IMR-90 (cell line): ENCODE measurements at regions of chr18 and their contacts with region 1.

Region 1: GRCh38 chr18:12890506-12890905 is 6.5 kb upstream of the PTPN2 start:
- DNase-seq: no peak
- ATAC-seq: no peak
- H3K4me3 ChIP-seq: no peak overlapping the region
- H3K27ac ChIP-seq: no peak overlapping the region
- H3K4me1 ChIP-seq: no peaks in the 10 kb centered on the region
- H3K27me3 ChIP-seq: 0 out of 2 replicates have a peak, but pooled peaks cover 4% of the 10 kb centered on the region
- CTCF ChIP-seq: 0 out of 2 replicates have a peak, but pooled peaks have one; percentile 10
- POLR2A ChIP-seq: no peak
- RAD21 ChIP-seq: no peak

Region 2: GRCh38 chr18:12744103-12744502 is 146.4 kb before region 1 on chr18:
- CTCF ChIA-PET with region 1: interaction called, 4 read pairs
- POLR2A ChIA-PET with region 1: no interaction called
- dilution Hi-C with region 1: no loop called
- in situ Hi-C with region 1: loop called (anchors 10 kb)
- intact Hi-C with region 1: loop called (anchors 1 kb)
- DNase-seq: peak; percentile 84
- ATAC-seq: peak; percentile 76
- H3K4me3 ChIP-seq: no peak overlapping the region
- H3K27ac ChIP-seq: no peak overlapping the region
- H3K4me1 ChIP-seq: peaks cover 6% of the 10 kb centered on the region
- H3K27me3 ChIP-seq: no peaks in the 10 kb centered on the region
- CTCF ChIP-seq: peak; percentile 87
- POLR2A ChIP-seq: no peak
- RAD21 ChIP-seq: peak; percentile 88

Region 3: DNA sequence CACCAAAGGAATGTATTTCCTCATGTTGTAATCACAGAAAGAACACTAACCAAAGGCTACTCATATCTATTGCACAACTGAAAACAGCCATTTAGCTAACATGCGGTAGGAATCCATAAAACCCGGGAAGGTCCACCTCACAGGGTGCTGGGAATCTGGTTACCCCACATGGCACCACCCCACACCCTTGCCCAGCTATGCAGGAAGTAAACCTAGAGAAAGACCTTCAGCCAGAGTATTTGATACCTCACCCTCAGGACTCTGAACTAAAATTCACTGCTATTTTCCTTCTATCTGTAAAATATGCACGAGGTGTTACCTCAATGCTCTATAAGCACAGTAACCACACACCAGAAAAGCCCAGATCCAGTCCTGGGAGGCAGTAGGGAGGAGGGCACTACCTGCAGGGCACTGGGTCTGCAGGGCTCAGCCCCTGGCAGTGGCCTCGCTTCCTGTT is 52.3 kb before region 1 on chr18:
- CTCF ChIA-PET with region 1: no interaction called
- POLR2A ChIA-PET with region 1: no interaction called
- dilution Hi-C with region 1: no loop called
- in situ Hi-C with region 1: no loop called
- intact Hi-C with region 1: no loop called
- DNase-seq: peak; percentile 90
- ATAC-seq: peak; percentile 88
- H3K4me3 ChIP-seq: no peak overlapping the region; the same call in 1 of the 2 replicates
- H3K27ac ChIP-seq: peak overlapping the region; percentile 93
- H3K4me1 ChIP-seq: peaks cover 15% of the 10 kb centered on the region
- H3K27me3 ChIP-seq: no peaks in the 10 kb centered on the region
- CTCF ChIP-seq: 0 out of 2 replicates have a peak, but pooled peaks have one; percentile 8
- POLR2A ChIP-seq: no peak
- RAD21 ChIP-seq: no peak